GM10248 (cell line): ENCODE measurements at regions of chr12 and their contacts with region 1.

Region 1: GRCh38 chr12:119695034-119695433 is 27.1 kb downstream of the PRKAB1 start:
- DNase-seq: no peak
- CTCF ChIP-seq: peak; percentile 37

Region 2: GRCh38 chr12:119727600-119728443 is 32.8 kb after region 1 on chr12:
- CTCF ChIA-PET with region 1: interaction called, 13 read pairs
- POLR2A ChIA-PET with region 1: no interaction called
- DNase-seq: no peak
- CTCF ChIP-seq: no peak

Region 3: GRCh38 chr12:119864591-119864990 is 169.6 kb after region 1 on chr12:
- CTCF ChIA-PET with region 1: no interaction called
- POLR2A ChIA-PET with region 1: no interaction called
- DNase-seq: no peak
- CTCF ChIP-seq: no peak